Mammary epithelial cell (primary cell): ENCODE measurements at regions of chr14 and their contacts with region 1.

Region 1: GRCh38 chr14:45810152-45810872 is 557.3 kb upstream of the MIS18BP1 start:
- DNase-seq: no peak
- H3K4me3 ChIP-seq: no peak overlapping the region
- H3K27ac ChIP-seq: no peak overlapping the region
- H3K4me1 ChIP-seq: peaks cover 7% of the 10 kb centered on the region
- H3K27me3 ChIP-seq: no peaks in the 10 kb centered on the region
- CTCF ChIP-seq: peak; percentile 45 to 62

Region 2: GRCh38 chr14:45426670-45427282 is 383.5 kb before region 1 on chr14:
- CTCF ChIA-PET with region 1: no interaction called
- dilution Hi-C with region 1: no loop called
- in situ Hi-C with region 1: no loop called
- intact Hi-C with region 1: loop called (anchors 10 kb)
- DNase-seq: peak; percentile 49
- H3K4me3 ChIP-seq: no peak overlapping the region
- H3K27ac ChIP-seq: no peak overlapping the region
- H3K4me1 ChIP-seq: no peaks in the 10 kb centered on the region
- H3K27me3 ChIP-seq: no peaks in the 10 kb centered on the region
- CTCF ChIP-seq: peak; percentile 47 to 67

Region 3: GRCh38 chr14:45610318-45610717 is 200.0 kb before region 1 on chr14:
- CTCF ChIA-PET with region 1: no interaction called
- dilution Hi-C with region 1: no loop called
- in situ Hi-C with region 1: loop called (anchors 25 kb)
- intact Hi-C with region 1: loop called (anchors 1 kb)
- DNase-seq: peak; percentile 33
- H3K4me3 ChIP-seq: no peak overlapping the region
- H3K27ac ChIP-seq: no peak overlapping the region
- H3K4me1 ChIP-seq: no peaks in the 10 kb centered on the region
- H3K27me3 ChIP-seq: no peaks in the 10 kb centered on the region
- CTCF ChIP-seq: peak; percentile 45 to 64

Region 4: DNA sequence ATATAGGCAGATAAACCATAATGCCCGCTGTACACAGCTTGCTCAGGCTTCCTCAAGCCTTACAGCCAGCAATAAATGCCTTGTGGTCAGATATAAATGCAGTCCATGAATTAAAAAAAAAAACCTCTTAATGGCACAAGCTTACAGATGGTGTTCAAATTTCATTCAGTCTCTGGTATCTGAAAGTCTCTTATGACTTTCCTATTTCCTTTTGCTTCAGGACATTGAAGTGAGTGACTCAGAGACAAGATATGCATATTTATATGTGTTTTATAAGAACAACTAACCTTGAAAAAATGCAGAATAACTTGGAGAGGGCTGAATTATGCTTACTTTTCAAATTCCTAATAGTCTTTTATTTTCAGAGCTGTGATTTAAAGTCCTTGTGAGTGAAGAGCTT is 130.5 kb before region 1 on chr14:
- CTCF ChIA-PET with region 1: no interaction called
- dilution Hi-C with region 1: no loop called
- in situ Hi-C with region 1: no loop called
- intact Hi-C with region 1: loop called (anchors 1 kb)
- DNase-seq: peak; percentile 66
- H3K4me3 ChIP-seq: no peak overlapping the region
- H3K27ac ChIP-seq: peak overlapping the region; percentile 57
- H3K4me1 ChIP-seq: peaks cover 14% of the 10 kb centered on the region
- H3K27me3 ChIP-seq: no peaks in the 10 kb centered on the region
- CTCF ChIP-seq: no peak

Region 5: GRCh38 chr14:45916322-45916953 is 106.1 kb after region 1 on chr14:
- CTCF ChIA-PET with region 1: no interaction called
- dilution Hi-C with region 1: no loop called
- in situ Hi-C with region 1: no loop called
- intact Hi-C with region 1: no loop called
- DNase-seq: no peak
- H3K4me3 ChIP-seq: no peak overlapping the region
- H3K27ac ChIP-seq: no peak overlapping the region
- H3K4me1 ChIP-seq: peaks cover 5% of the 10 kb centered on the region
- H3K27me3 ChIP-seq: no peaks in the 10 kb centered on the region
- CTCF ChIP-seq: no peak

Region 6: GRCh38 chr14:46519121-46519520 is 708.8 kb after region 1 on chr14:
- CTCF ChIA-PET with region 1: no interaction called
- dilution Hi-C with region 1: no loop called
- in situ Hi-C with region 1: no loop called
- intact Hi-C with region 1: no loop called
- DNase-seq: no peak
- H3K4me3 ChIP-seq: no peak overlapping the region
- H3K27ac ChIP-seq: no peak overlapping the region
- H3K4me1 ChIP-seq: no peaks in the 10 kb centered on the region
- H3K27me3 ChIP-seq: no peaks in the 10 kb centered on the region
- CTCF ChIP-seq: no peak

Region 7: GRCh38 chr14:46820291-46820690 is 1010.0 kb after region 1 on chr14:
- CTCF ChIA-PET with region 1: no interaction called
- dilution Hi-C with region 1: no loop called
- in situ Hi-C with region 1: no loop called
- intact Hi-C with region 1: no loop called
- DNase-seq: no peak
- H3K4me3 ChIP-seq: no peak overlapping the region
- H3K27ac ChIP-seq: no peak overlapping the region
- H3K4me1 ChIP-seq: no peaks in the 10 kb centered on the region
- H3K27me3 ChIP-seq: no peaks in the 10 kb centered on the region
- CTCF ChIP-seq: no peak